Head of caudate nucleus (tissue), 42 donors: ENCODE measurements at regions of chr16 and their contacts with region 1.

Region 1: DNA sequence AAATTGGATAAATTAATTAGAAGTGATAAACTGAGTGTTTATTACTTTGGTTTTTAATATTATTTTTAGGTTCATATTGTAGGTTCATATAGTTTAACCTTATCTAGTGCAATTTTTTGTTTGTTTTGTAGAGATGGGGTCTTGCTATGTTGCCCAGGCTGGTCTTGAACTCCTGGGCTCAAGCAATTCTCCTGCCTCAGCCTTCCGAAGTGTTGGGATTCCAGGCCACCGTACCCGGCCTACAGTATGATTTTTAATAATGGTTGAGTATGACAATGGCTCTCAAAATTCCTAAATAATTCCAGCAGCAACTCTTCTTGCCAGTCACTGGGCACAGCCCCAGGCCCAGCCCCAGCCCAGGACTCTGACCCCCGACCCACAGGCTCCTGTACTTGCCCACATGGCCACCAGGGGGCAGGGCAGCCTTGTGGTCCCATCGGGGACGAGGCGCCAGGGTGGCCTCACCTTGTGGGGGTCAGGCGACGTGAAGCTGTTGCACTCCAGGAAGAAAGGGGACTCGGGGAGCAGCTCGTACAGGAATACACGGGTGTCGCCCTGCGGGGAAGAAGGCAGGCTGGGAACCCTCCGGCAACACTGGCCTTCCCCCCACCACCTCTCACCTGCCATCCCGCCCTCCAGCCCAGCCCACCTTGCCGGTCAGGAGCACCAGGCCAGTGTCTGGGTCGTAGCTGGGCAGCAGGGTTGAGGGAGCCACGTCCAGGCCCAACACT is 7.9 kb upstream of the PAM16 start:
- DNase-seq: peak in 39 of 42 donors; percentile 38 to 89 (median 70)

Region 2: GRCh38 chr16:4090351-4090851 is 268.6 kb before region 1 on chr16:
- intact Hi-C with region 1: no loop called
- DNase-seq: peak in 1 of 42 donors; percentile 46

Region 3: DNA sequence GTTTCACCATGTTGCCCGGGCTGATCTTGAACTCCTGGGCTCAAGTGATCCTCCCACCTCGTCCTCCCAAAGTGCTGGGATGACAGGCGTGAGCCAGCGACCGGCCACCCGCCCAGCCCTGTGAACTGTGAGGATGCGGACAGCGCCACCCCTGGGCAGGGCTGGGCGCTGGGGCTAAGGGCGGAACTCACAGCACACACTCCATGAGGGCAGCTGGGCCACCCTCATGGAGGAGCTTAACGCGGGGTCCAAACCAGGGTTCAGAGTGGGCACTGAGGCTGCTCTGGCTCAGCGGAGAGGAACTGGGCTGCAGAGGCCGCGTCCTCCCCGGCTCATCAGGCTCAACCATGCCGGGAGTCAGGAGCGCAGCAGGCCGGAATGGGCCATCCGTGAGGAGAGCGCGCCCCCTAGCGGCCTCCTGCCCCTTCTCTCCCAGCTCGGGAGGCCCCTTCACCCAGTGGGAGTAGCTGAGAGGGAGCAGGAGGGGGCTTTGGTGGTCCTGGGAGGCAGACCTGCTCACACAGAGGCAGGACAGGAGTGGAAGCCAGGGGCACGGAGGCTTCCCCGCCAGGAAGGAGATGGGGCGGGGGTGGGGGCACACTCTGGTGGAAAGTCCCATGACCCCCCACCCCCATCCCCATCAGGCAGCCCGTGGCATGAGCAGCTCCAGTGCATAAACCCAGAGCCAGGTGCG is 43.6 kb after region 1 on chr16:
- intact Hi-C with region 1: loop called (anchors 2 kb)
- DNase-seq: peak; percentile 76 to 96 (median 90)

Region 4: DNA sequence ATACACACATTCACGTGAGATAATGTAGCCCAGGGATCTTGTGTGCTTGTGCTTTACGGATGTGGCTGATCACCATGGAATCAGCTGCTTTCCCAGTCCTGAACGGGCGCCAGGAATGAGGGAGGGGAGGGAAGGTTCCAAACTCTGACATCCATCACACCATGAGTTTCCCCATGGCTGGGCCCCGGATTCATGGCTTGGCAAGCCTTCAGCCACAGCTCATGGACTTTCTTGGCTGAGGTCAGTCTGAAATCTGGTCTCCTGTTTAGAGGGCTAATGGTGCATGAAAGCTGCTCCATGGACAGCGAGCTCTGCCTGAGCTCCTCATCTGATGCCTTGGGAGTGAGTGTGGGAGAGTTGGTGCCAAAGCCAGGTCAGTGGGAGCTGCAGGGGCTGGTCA is 1506.2 kb after region 1 on chr16:
- intact Hi-C with region 1: no loop called
- DNase-seq: no peak